Vagina (tissue), 2 donors: ENCODE measurements at regions of chr19 and their contacts with region 1.

Region 1: GRCh38 chr19:1551068-1552040 is 16.8 kb downstream of the MEX3D start:
- DNase-seq: no peak
- H3K4me3 ChIP-seq: no peak overlapping the region
- H3K27ac ChIP-seq: no peak overlapping the region
- H3K4me1 ChIP-seq: no peaks in the 10 kb centered on the region
- H3K27me3 ChIP-seq: no peaks in the 10 kb centered on the region
- CTCF ChIP-seq: no peak
- POLR2A ChIP-seq: no peak

Region 2: DNA sequence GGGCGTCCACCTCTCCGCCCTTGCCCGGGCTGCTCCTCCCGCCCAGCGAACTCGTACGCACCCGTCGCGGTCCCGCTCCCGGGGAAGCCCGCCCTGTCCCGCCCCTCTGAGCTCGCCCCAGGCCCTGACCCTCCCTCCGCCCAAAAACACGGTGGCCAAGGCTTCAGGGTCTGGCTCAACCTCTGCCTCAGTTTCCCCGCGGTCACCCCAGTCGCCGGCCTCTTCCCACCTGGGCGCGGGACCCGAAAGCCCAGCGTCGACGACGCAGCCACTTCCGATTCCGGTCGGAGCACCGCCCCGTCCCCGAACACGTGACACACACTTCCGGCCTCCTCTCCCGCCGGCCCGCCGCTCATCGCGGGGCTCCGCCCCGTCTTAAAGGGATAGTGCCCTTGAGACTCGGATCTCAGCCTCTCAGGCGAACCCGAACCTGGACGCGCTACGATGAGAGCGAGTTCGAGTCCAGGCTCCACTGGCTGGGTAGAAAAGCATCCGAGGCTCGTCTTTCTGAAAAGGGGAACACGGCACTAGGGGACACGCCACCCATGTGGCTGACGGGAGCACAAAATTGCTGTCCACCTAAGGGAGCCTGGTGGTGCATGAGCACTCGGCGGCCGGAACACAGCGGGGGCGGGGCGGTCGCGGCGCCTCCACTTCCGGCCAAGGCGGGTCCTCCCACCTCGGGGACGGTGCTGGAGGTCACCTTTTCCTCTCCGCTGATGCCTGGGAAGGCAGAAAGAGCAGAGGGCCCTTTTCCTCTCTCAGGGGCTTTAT is 72.2 kb before region 1 on chr19 and contains the start of gene C19orf25:
- intact Hi-C with region 1: no loop called
- DNase-seq: peak in 1 of 2 donors; percentile 94
- H3K4me3 ChIP-seq: peak within 1 kb of the TSS; percentile 72 to 97
- H3K27ac ChIP-seq: peak within 1 kb of the TSS; percentile 75
- H3K4me1 ChIP-seq: peaks cover 34% of the 10 kb centered on the region
- H3K27me3 ChIP-seq: no peaks in the 10 kb centered on the region
- CTCF ChIP-seq: peak in 1 of 3 experiments; percentile 4
- POLR2A ChIP-seq: peak in 1 of 2 donors; percentile 58
- total RNA-seq, gene C19orf25: 25.0 TPM

Region 3: DNA sequence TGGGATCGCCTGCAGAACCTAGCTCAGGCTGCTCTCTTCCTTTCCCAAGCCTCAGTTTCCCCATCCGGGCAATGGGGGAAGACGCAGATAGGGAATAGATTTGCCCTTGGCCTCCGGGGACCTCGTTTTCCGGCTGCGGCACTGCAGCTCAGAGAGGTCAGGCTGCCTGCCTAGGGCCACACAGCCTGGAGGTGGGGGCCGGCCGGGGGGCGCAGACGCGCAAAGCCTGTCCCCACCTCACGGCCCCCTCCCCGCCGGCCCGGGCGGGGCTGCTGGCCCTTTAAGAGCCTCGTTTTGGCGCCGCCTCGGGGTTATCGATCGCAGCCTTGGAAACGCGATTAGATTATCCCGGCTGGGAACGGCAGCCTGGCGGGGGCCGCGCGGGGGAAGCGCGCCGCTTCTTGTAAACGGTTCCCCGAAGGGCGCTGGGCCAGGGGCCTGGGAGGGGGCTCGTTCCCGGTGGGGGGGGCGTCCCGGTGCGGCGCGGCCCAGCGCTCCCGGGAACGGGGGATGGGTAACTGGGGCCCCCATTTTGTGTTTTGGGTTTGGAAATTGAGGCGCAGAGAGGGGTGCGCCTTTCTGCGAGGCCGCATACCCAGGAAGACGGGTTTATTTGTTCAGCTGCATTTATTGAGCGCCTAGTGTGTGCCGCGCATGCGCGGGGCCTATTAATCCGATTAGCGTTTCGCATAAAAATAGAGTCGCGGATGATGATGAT is 124.4 kb after region 1 on chr19:
- intact Hi-C with region 1: loop called (anchors 5 kb)
- DNase-seq: no peak
- H3K4me3 ChIP-seq: no peak overlapping the region
- H3K27ac ChIP-seq: no peak overlapping the region
- H3K4me1 ChIP-seq: peaks cover 19% of the 10 kb centered on the region
- H3K27me3 ChIP-seq: peaks cover 5% of the 10 kb centered on the region
- CTCF ChIP-seq: no peak
- POLR2A ChIP-seq: no peak

Region 4: DNA sequence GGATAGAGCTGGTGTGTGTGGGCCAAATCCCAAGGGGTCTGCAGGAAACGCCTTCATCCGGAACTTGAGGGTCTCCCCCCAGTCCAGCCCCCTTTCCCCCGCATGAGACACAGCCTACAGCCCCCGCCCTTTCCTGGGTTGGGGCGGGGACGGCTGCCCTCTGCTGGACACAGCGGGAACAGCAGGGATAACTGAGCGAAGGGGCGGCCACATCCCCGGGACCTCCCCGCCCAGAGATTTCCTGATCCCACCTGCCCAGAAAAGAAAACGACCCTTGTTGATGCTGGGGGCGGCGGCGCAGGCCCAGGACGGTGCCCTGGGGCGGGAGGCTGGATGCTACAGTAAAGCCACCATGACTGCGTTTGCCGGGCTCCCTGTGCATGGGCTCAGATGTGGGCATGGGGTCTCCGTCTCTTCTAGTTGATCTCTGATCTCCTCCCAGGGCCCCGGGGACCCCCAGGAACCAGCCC is 216.1 kb after region 1 on chr19:
- intact Hi-C with region 1: loop called (anchors 5 kb)
- DNase-seq: no peak
- H3K4me3 ChIP-seq: no peak overlapping the region
- H3K27ac ChIP-seq: no peak overlapping the region
- H3K4me1 ChIP-seq: no peaks in the 10 kb centered on the region
- H3K27me3 ChIP-seq: peaks cover 6% of the 10 kb centered on the region
- CTCF ChIP-seq: peak; percentile 76 to 88 (median 82)
- POLR2A ChIP-seq: no peak